HEK293 (cell line): ENCODE measurements at regions of chr2 and their contacts with region 1.

Region 1: DNA sequence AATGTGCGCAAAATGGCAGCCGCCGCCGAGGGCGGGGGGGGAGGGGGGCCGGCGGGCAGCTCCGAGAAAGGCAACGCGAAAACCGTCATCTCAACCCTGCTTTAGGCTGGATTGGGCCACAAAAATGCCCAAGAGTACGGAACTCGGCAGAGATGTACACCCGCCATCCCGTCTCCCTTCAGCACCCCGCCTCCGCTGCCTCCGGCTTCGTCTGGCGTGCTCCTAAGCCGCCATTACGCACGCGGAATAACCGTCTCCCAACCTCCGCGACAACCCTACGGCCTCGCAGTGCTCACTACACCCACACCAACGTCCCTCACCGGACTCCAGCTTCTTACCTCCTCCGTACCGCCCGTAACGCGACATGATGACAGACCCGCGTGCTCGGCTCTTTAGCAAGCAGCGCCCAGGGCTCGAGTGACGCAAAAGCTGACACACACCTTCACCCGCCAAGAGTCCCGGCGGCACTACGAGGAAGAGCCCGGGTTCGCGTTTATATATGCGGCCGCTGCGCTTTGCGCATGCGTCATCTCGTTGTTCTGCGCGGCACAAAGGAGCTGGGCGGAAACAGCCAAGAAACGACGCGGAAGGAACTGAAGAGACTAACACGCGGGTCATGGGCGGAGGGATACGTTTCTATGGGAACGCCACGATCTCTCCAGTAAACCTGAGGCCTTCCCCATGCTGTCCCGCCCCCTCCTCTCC is at the start of gene SRSF7:
- H3K4me3 ChIP-seq: peak within 1 kb of the TSS; percentile 84
- H3K27ac ChIP-seq: peak within 1 kb of the TSS; percentile 97
- H3K4me1 ChIP-seq: peaks cover 5% of the 10 kb centered on the region; the same call in 1 of the 2 replicates
- CTCF ChIP-seq: peak; percentile 73

Region 2: GRCh38 chr2:38523728-38524437 is 227.2 kb before region 1 on chr2:
- CTCF ChIA-PET with region 1: no interaction called
- POLR2A ChIA-PET with region 1: interaction called, 14 read pairs
- H3K4me3 ChIP-seq: no peak overlapping the region
- H3K27ac ChIP-seq: no peak overlapping the region
- H3K4me1 ChIP-seq: peaks cover 8% of the 10 kb centered on the region
- CTCF ChIP-seq: peak; percentile 22; the same call in 1 of the 2 replicates

Region 3: GRCh38 chr2:38602732-38603401 is 148.2 kb before region 1 on chr2 and contains the start of gene HNRNPLL:
- CTCF ChIA-PET with region 1: interaction called, 3 read pairs
- POLR2A ChIA-PET with region 1: interaction called, 71 read pairs
- H3K4me3 ChIP-seq: peak within 1 kb of the TSS; percentile 87
- H3K27ac ChIP-seq: peak within 1 kb of the TSS; percentile 97
- H3K4me1 ChIP-seq: peaks cover 23% of the 10 kb centered on the region; the same call in 1 of the 2 replicates
- CTCF ChIP-seq: peak; percentile 17; the same call in 1 of the 2 replicates

Region 4: DNA sequence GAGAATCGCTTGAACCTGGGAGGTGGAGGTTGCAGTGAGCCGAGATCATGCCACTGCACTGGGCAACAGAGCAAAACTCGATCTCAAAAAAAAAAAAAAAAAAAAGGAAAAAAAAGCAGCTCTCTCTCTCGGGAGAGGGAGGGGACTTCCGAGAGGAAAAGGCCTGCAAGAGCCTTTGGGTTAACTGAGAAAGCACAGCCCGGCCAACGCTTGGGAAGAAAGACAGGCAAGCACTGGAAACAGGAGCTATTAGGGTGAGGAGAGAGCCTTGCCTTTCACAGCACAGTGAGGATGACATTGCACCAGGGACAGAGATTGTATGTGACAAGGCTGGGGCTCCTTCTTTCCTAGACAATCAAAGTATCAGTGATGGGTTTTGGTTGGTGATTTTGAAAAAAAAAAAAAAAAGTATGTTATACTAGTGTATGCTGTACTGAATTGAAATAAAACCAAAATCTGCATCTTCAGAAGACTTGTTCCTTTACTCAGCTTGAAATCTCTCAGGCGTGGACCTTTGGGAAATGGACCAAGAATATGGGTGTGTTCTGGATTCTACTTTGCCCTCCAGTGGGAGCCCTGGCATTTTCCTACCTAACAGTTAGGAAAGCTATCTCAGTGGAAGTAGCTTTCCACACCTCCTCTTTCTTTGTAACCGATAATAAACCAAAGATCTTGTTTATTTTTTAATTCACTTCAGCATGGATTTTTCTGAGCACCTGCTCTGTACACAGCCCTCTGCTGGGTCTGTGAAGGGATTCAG is 16.6 kb before region 1 on chr2:
- CTCF ChIA-PET with region 1: interaction called, 5 read pairs
- POLR2A ChIA-PET with region 1: interaction called, 52 read pairs
- H3K4me3 ChIP-seq: no peak overlapping the region
- H3K27ac ChIP-seq: no peak overlapping the region
- H3K4me1 ChIP-seq: no peaks in the 10 kb centered on the region
- CTCF ChIP-seq: no peak

Region 5: DNA sequence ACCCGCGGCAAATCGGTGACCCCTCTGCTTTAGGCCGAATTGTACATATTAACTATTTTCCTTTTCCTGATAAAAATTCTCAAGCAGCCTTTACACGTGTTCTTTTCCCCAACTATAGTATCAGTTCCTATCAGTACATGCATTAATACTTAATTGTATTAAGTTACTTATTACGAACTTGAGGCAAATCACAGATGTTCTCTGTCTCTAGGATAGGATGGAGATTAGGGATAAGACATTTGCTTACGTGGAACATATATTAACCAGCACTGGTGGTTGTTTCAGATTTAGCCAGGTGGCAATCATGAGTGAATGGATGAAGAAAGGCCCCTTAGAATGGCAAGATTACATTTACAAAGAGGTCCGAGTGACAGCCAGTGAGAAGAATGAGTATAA is 27.6 kb after region 1 on chr2:
- CTCF ChIA-PET with region 1: no interaction called
- POLR2A ChIA-PET with region 1: interaction called, 41 read pairs
- H3K4me3 ChIP-seq: peak overlapping the region; percentile 55
- H3K27ac ChIP-seq: peak overlapping the region; percentile 56; the same call in 1 of the 2 replicates
- H3K4me1 ChIP-seq: 0 out of 2 replicates have a peak, but pooled peaks cover 3% of the 10 kb centered on the region
- CTCF ChIP-seq: no peak

Region 6: DNA sequence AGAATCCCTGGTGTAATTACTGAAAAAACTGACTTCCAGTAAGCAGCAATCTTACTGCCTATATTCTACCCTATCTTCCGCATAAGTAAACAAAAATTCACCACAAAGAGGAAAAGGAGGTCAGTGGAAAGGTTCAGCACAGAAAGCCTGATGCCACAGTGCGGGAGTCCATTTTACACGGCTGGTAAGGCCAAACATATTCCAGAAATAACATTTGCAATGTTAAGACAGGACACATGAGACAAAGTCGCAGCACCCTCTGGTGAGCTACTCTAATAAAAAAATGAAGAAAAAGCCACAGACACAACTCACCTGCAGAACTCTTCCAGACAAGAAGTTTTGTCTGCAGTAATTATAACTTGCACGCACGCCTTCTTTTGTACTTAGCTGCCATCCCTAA is 67.5 kb after region 1 on chr2:
- CTCF ChIA-PET with region 1: interaction called, 4 read pairs
- POLR2A ChIA-PET with region 1: interaction called, 15 read pairs
- H3K4me3 ChIP-seq: no peak overlapping the region
- H3K27ac ChIP-seq: no peak overlapping the region
- H3K4me1 ChIP-seq: no peaks in the 10 kb centered on the region
- CTCF ChIP-seq: no peak

Region 7: GRCh38 chr2:38947240-38948239 is 196.5 kb after region 1 on chr2:
- CTCF ChIA-PET with region 1: no interaction called
- POLR2A ChIA-PET with region 1: interaction called, 12 read pairs
- H3K4me3 ChIP-seq: no peak overlapping the region
- H3K27ac ChIP-seq: no peak overlapping the region
- H3K4me1 ChIP-seq: peaks cover 9% of the 10 kb centered on the region
- CTCF ChIP-seq: peak; percentile 78